Mammary epithelial cell (primary cell): ENCODE measurements at regions of chr22 and their contacts with region 1.

Region 1: GRCh38 chr22:41301105-41302020 is at the start of gene ZC3H7B:
- DNase-seq: peak; percentile 80
- H3K4me3 ChIP-seq: peak within 1 kb of the TSS; percentile 82 to 90 (median 86)
- H3K27ac ChIP-seq: peak within 1 kb of the TSS; percentile 75
- H3K4me1 ChIP-seq: peaks cover 21% of the 10 kb centered on the region
- H3K27me3 ChIP-seq: no peaks in the 10 kb centered on the region
- CTCF ChIP-seq: peak in 1 of 2 donors; percentile 70
- total RNA-seq, gene ZC3H7B: 30.0 to 62.9 TPM

Region 2: GRCh38 chr22:41204992-41205900 is 96.1 kb before region 1 on chr22 and contains the start of gene L3MBTL2:
- CTCF ChIA-PET with region 1: no interaction called
- dilution Hi-C with region 1: loop called (anchors 10 kb)
- in situ Hi-C with region 1: no loop called
- intact Hi-C with region 1: no loop called
- DNase-seq: peak; percentile 95
- H3K4me3 ChIP-seq: peak within 1 kb of the TSS; percentile 37 to 73 (median 61)
- H3K27ac ChIP-seq: peak within 1 kb of the TSS; percentile 78
- H3K4me1 ChIP-seq: peaks cover 5% of the 10 kb centered on the region
- H3K27me3 ChIP-seq: no peaks in the 10 kb centered on the region
- CTCF ChIP-seq: no peak
- total RNA-seq, gene L3MBTL2: 21.0 to 22.2 TPM

Region 3: DNA sequence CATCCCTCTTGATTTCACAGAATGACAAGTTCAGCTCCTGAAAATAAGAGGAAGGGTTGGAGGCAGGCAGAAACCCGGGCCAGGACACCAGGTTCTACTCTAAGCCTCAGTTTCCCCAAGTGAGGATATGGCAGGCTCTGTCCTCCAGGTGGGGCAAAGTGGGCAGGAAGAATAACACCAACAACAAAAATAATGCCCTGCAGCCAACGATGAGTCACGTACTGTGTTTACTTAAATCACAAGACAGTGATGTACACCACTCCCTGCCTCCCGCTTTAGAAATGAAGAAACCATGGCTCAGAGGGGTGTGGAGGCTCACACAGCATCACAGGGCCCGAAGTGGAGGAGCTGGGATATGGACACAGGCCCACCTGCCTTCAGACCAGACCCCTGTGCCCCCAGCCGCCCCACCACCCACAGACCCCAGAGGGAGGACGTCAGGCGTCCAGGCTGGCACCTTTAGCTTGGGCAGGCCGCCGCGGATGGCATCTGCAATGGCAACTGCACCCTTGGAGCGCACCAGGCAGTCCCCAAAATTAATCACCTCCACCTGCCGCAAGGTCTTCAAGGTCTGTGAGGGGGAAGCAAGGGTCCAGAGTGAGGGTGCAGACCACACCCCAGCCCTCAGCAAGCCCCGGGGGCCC is 45.0 kb before region 1 on chr22:
- CTCF ChIA-PET with region 1: no interaction called
- dilution Hi-C with region 1: no loop called
- in situ Hi-C with region 1: no loop called
- intact Hi-C with region 1: loop called (anchors 1 kb)
- DNase-seq: peak; percentile 81
- H3K4me3 ChIP-seq: no peak overlapping the region
- H3K27ac ChIP-seq: no peak overlapping the region
- H3K4me1 ChIP-seq: peaks cover 13% of the 10 kb centered on the region
- H3K27me3 ChIP-seq: no peaks in the 10 kb centered on the region
- CTCF ChIP-seq: peak; percentile 18 to 55

Region 4: DNA sequence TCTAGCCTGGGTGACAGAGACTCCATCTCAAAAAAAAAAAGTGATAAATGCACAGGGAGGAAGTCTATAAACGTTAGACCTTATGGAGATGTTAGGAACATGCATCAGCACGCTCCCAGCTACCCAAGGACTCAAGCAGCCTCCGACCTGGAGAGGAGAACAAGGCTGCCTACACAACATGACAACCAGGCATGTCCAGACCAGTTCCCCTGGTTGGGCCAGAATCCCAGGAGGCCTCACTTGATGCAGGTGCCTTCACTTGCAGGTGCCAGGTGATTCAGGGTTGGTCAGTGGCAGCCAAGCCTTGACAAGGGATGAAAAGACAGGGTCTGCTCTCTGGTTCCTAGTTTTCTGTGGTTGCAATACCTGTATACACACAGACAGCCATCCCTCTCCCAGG is 21.3 kb before region 1 on chr22:
- CTCF ChIA-PET with region 1: interaction called, 4 read pairs
- dilution Hi-C with region 1: no loop called
- in situ Hi-C with region 1: no loop called
- intact Hi-C with region 1: loop called (anchors 2 kb)
- DNase-seq: peak; percentile 99
- H3K4me3 ChIP-seq: no peak overlapping the region
- H3K27ac ChIP-seq: no peak overlapping the region
- H3K4me1 ChIP-seq: peaks cover 40% of the 10 kb centered on the region
- H3K27me3 ChIP-seq: no peaks in the 10 kb centered on the region
- CTCF ChIP-seq: no peak

Region 5: DNA sequence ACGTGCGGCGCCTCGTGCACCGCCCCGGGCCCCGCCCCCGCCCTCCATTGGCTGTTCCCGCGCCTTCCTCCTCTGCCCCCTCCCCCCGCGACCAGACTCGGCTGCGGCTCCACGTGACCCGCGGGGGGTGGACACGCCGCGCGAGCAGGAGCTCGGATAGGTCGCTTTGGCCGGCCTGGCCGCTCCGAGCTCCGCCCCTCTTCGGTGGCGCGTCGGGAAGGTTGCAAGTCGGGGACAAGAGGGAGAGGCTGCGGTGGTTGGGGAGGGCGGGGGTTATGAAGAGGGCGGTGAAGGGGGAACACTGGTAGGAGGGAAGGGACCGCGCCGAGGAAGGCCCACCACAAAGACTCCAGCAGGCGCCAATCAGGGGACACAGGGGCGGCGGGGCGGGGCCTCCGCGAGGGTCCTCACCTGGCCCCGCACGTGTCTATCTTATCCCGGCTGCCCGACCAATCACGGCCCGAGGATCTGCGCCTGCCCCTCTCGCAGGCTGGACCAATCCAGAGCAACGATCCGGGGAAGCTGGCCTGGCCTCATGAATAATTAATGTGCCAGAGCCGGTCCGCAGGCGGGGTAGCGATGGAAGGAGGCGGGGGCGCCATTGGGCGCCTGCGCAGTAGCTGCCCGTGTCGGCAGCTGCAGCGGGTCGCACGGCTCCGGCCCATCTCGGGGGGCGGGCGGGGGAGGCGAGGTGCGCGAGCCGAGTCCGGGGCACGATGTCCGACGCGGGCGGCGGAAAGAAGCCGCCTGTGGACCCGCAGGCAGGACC is 80.2 kb after region 1 on chr22 and contains the start of gene TEF:
- CTCF ChIA-PET with region 1: no interaction called
- dilution Hi-C with region 1: no loop called
- in situ Hi-C with region 1: no loop called
- intact Hi-C with region 1: loop called (anchors 5 kb)
- DNase-seq: peak; percentile 98
- H3K4me3 ChIP-seq: peak within 1 kb of the TSS; percentile 65 to 78 (median 65)
- H3K27ac ChIP-seq: peak within 1 kb of the TSS; percentile 89
- H3K4me1 ChIP-seq: peaks cover 24% of the 10 kb centered on the region
- H3K27me3 ChIP-seq: no peaks in the 10 kb centered on the region
- CTCF ChIP-seq: no peak
- total RNA-seq, gene TEF: 5.2 TPM